Heart left ventricle (tissue), 16 donors: ENCODE measurements at regions of chr11 and their contacts with region 1.

Region 1: DNA sequence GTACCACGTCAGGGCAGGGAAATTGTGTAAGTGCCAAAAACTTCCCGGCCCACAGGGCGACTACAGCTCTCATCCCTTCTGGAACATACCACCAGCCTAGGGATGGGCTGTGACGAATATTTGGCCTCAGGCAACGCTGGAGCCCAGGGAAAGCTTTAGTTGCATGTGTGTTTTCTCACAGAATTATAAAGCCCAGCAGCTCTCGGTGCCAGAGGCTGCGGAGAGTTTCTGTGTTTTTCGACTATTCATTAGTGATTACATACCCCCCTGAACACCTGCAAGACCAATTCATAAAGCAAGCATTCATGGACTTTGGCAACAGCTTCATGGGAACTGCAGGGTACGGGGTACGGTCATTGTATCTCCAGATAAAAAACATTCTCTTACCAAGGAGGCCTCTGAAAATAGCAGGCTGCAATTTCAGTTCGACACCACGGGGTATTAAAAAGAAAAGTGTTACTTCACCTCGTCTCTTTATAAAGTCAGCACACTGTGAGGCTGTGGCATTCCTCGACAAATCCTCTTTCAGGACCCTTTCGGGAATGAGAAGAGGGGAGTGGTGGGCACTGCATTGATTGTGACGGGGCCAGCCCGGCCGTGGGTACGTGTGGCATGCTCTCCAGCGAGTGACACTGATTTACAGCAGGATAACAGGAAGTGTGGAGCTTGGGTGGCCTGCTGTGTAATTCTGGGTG is 243.6 kb upstream of the SORL1-AS1 start:
- DNase-seq: peak in 4 of 5 donors; percentile 35 to 53 (median 40)
- ATAC-seq: peak; percentile 78 to 87 (median 84)
- H3K4me3 ChIP-seq: peak overlapping the region in 6 of 12 donors; percentile 3 to 32 (median 18)
- H3K27ac ChIP-seq: peak overlapping the region; percentile 59 to 94 (median 79)
- H3K4me1 ChIP-seq: peaks cover 0 to 26% (median 5%) of the 10 kb centered on the region in 12 donors
- H3K27me3 ChIP-seq: no peaks in the 10 kb centered on the region
- CTCF ChIP-seq: no peak
- POLR2A ChIP-seq: no peak

Region 2: DNA sequence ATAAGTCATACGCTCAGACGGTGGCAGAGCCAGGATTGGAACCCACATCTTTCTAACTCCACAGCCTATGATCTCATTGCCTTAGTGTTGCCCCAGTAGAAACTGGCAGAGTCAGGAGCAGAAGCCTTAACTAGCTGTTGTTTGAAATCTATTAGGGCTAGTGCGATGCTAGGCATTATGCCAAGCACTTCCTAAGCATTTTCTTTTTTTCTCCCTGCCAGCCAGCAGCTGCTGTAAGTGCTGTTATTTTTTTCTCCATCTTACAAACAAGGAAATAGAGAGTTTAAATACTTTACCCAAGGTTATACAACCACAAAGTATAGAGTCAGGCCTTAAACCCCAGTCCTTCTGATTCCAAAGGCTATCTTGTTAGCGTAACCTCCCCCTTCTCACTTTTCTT is 82.6 kb before region 1 on chr11:
- intact Hi-C with region 1: no loop called
- DNase-seq: no peak
- ATAC-seq: no peak
- H3K4me3 ChIP-seq: no peak overlapping the region
- H3K27ac ChIP-seq: no peak overlapping the region
- H3K4me1 ChIP-seq: no peaks in the 10 kb centered on the region
- H3K27me3 ChIP-seq: no peaks in the 10 kb centered on the region
- CTCF ChIP-seq: no peak
- POLR2A ChIP-seq: no peak

Region 3: DNA sequence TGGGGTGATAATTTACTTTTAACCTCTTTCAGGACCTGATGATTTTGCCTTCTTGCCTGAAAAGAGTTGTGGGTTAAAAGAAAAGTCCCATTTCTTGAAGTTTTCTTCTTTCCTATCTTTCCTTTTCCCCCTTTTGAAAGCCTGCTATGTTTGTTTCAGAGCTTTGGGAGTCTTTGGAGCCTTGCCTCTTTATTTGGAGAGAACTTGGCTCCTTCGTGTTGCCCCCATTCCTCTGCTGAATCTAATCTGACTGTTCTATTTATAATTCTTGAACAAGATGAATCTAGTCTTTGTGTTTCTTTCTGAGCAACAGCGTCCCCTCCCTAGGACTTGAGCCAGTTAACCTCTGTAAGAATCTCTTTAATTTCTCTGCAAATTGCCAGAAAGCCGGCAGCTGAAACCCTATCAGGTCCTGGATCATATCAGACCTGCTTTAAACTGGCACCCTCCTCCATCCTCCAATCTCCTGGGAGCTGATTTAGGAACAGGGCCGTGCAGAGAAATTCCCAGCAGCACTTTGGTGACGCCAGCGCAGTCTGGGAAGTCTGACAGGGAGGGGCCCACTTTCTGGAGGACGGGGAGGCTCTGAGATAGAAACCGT is 45.5 kb after region 1 on chr11:
- intact Hi-C with region 1: loop called in 1 of 10 experiments (anchors 2 kb)
- DNase-seq: peak; percentile 76 to 90 (median 79)
- ATAC-seq: peak; percentile 88 to 97 (median 96)
- H3K4me3 ChIP-seq: peak overlapping the region in 5 of 12 donors; percentile 5 to 19 (median 14)
- H3K27ac ChIP-seq: peak overlapping the region; percentile 68 to 91 (median 84)
- H3K4me1 ChIP-seq: peaks cover 0 to 28% (median 19%) of the 10 kb centered on the region in 12 donors
- H3K27me3 ChIP-seq: no peaks in the 10 kb centered on the region
- CTCF ChIP-seq: peak in 6 of 12 donors; percentile 7 to 27 (median 18)
- POLR2A ChIP-seq: no peak

Region 4: GRCh38 chr11:121793291-121793690 is 97.0 kb after region 1 on chr11:
- intact Hi-C with region 1: no loop called
- DNase-seq: no peak
- ATAC-seq: no peak
- H3K4me3 ChIP-seq: no peak overlapping the region
- H3K27ac ChIP-seq: no peak overlapping the region
- H3K4me1 ChIP-seq: no peaks in the 10 kb centered on the region
- H3K27me3 ChIP-seq: no peaks in the 10 kb centered on the region
- CTCF ChIP-seq: no peak
- POLR2A ChIP-seq: no peak

Region 5: DNA sequence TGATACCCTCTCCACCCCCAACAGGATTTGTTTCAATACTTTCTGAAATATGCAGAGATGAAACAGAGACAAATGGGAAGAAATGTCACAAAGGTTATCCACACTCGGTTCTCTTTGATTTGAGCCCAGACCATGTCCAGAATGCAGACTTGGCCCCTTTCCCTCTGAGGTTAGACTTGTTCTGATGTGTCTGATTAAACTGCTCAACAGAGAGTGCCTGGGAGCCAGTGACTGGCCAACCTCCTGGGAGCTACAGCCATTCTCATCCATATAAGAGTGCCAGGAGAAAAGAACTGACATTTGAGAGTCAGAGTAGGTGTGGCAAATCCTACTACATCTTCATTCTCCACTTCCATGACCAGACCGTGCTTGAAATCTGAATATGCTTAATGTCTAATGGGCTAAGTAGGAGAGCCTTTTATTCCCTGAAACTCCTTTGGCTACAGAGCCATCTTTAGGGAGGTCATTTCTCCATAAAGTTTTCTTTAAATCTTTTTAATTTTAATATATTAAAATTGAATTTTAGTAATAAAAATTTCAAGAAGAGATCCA is 218.3 kb after region 1 on chr11:
- intact Hi-C with region 1: no loop called
- DNase-seq: no peak
- ATAC-seq: no peak
- H3K4me3 ChIP-seq: no peak overlapping the region
- H3K27ac ChIP-seq: no peak overlapping the region
- H3K4me1 ChIP-seq: no peaks in the 10 kb centered on the region
- H3K27me3 ChIP-seq: no peaks in the 10 kb centered on the region
- CTCF ChIP-seq: no peak
- POLR2A ChIP-seq: no peak